B cell (primary cell): ENCODE measurements at regions of chr1 and their contacts with region 1.

Region 1: GRCh38 chr1:183635606-183636333 is at the start of gene ARPC5:
- DNase-seq: peak; percentile 98
- ATAC-seq: peak; percentile 88
- H3K4me3 ChIP-seq: peak within 1 kb of the TSS; percentile 83 to 95 (median 87)
- H3K4me3 Mint-ChIP-seq: peak within 1 kb of the TSS; percentile 100
- H3K27ac ChIP-seq: peak within 1 kb of the TSS; percentile 59 to 80
- H3K27ac Mint-ChIP-seq: peak within 1 kb of the TSS; percentile 99
- H3K4me1 ChIP-seq: peaks cover 20 to 34% of the 10 kb centered on the region in 2 donors
- H3K4me1 Mint-ChIP-seq: peaks cover 42% of the 10 kb centered on the region
- H3K27me3 ChIP-seq: no peaks in the 10 kb centered on the region
- H3K27me3 Mint-ChIP-seq: no peaks in the 10 kb centered on the region
- CTCF ChIP-seq: no peak
- total RNA-seq, gene ARPC5: 91.9 and 103 TPM in 2 replicates

Region 2: GRCh38 chr1:182029379-182030331 is 1606.1 kb before region 1 on chr1:
- CTCF ChIA-PET with region 1: no interaction called
- POLR2A ChIA-PET with region 1: no interaction called
- intact Hi-C with region 1: loop called (anchors 5 kb)
- DNase-seq: peak; percentile 98
- ATAC-seq: peak; percentile 92
- H3K4me3 ChIP-seq: peak overlapping the region; percentile 50 to 84 (median 72)
- H3K4me3 Mint-ChIP-seq: peak overlapping the region; percentile 92
- H3K27ac ChIP-seq: peak overlapping the region; percentile 60 to 71
- H3K27ac Mint-ChIP-seq: peak overlapping the region; percentile 94
- H3K4me1 ChIP-seq: peaks cover 9 to 12% of the 10 kb centered on the region in 2 donors
- H3K4me1 Mint-ChIP-seq: peaks cover 15% of the 10 kb centered on the region
- H3K27me3 ChIP-seq: no peaks in the 10 kb centered on the region
- H3K27me3 Mint-ChIP-seq: no peaks in the 10 kb centered on the region
- CTCF ChIP-seq: peak; percentile 41

Region 3: DNA sequence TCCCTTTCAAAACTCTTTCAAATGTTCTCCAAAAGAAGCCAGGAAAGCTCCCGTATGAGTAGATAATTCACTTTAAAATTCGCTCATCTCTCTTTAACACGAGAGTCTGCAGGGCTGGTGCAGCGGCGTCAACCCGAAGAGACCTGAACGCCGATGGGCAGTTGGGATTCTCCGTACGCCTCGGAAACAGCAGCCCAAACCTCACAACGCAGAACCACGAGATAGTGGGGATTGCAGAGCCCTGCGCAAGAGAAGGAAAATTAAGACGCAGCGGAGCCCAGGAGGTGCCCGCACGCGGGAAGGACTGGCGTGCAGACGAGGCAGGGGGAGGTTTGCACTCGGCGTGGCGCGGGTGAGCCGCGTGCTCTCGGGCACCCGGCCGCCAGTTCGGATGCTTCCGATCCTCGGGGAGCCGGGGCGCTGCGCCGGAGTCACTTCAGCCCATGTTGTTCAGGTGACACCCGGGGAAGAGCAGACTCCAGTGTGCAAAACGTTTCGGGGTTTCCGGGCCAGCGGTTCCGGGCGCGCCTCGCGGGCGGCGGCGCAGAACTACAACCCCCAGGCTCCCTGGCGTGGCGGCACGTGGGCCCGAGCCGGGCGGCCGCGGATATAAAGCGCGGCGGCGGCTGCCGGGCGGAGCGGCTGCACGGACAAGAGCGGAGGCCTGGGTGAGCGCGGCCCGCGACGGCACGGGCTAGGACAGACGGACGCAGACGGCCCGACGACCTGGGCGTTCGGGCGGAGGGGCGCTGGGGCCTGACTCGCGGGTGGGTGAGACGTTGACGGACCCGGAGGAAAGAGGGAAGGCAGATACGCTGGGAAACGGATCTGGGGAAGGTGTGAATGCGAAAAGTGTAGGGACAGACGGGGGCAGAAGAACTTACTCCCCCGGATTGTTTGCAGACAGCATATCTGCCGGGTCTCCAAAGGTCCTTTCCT is 846.4 kb before region 1 on chr1 and contains the start of gene NPL:
- CTCF ChIA-PET with region 1: no interaction called
- POLR2A ChIA-PET with region 1: no interaction called
- intact Hi-C with region 1: loop called (anchors 5 kb)
- DNase-seq: peak; percentile 88
- ATAC-seq: peak; percentile 95
- H3K4me3 ChIP-seq: peak within 1 kb of the TSS; percentile 49 to 70 (median 63)
- H3K4me3 Mint-ChIP-seq: peak within 1 kb of the TSS; percentile 90
- H3K27ac ChIP-seq: peak within 1 kb of the TSS in 1 of 2 donors; percentile 63
- H3K27ac Mint-ChIP-seq: peak within 1 kb of the TSS; percentile 87
- H3K4me1 ChIP-seq: peaks cover 9 to 11% of the 10 kb centered on the region in 2 donors
- H3K4me1 Mint-ChIP-seq: peaks cover 16% of the 10 kb centered on the region
- H3K27me3 ChIP-seq: peaks cover 0 to 6% (median 0%) of the 10 kb centered on the region in 4 experiments
- H3K27me3 Mint-ChIP-seq: peaks cover 3% of the 10 kb centered on the region
- CTCF ChIP-seq: no peak
- total RNA-seq, gene NPL: 3.4 and 5.9 TPM in 2 replicates

Region 4: DNA sequence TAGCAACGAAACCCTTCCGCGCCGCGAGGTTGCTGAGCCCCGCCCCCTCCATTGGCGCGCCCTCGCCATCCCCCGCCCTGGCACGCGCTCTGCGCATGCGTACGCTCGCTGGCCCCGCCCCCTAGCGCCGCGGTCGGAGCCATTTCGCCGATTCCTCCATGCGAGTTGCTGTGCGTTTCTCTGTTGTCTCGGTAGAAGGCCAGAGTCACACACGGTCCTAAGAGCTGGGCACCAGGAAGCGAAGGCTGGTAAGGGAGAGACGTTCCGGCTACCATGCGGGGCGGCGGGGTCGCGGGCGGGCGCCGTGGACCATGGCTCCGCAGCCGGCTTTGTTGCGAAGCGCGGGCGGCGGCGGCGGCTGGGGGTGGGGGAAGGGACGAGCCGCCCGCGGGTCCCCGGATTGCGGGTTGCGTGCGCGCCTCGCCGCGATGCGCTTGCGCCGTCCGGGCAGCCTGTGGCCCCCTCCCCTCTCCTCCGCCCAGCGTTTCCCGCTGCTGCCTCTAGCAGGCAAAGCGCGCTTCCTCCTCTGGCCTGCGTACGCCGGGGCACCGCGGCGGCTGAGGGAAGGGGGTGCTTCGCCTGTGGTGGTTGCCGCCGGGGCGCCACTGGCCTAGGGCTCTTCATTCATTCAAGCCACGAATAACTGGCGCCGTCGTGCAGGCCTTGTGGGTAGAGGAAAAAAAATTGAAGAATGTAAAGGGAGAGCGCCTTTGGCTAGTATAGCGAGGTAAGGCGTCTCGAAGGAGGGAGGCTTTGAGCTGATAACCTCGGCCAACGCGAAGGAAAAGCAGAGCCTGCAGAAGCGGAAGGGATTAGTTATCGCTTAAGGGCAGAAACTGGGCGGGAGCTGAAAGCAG is 796.3 kb before region 1 on chr1 and contains the start of gene DHX9:
- CTCF ChIA-PET with region 1: no interaction called
- POLR2A ChIA-PET with region 1: no interaction called
- intact Hi-C with region 1: loop called (anchors 2 kb)
- DNase-seq: peak; percentile 97
- ATAC-seq: peak; percentile 80
- H3K4me3 ChIP-seq: peak within 1 kb of the TSS; percentile 85 to 92 (median 92)
- H3K4me3 Mint-ChIP-seq: peak within 1 kb of the TSS; percentile 92
- H3K27ac ChIP-seq: peak within 1 kb of the TSS; percentile 81 to 85
- H3K27ac Mint-ChIP-seq: peak within 1 kb of the TSS; percentile 97
- H3K4me1 ChIP-seq: peaks cover 22 to 28% of the 10 kb centered on the region in 2 donors
- H3K4me1 Mint-ChIP-seq: peaks cover 35% of the 10 kb centered on the region
- H3K27me3 ChIP-seq: no peaks in the 10 kb centered on the region
- H3K27me3 Mint-ChIP-seq: no peaks in the 10 kb centered on the region
- CTCF ChIP-seq: peak; percentile 43
- total RNA-seq, gene DHX9: 207 and 213 TPM in 2 replicates

Region 5: DNA sequence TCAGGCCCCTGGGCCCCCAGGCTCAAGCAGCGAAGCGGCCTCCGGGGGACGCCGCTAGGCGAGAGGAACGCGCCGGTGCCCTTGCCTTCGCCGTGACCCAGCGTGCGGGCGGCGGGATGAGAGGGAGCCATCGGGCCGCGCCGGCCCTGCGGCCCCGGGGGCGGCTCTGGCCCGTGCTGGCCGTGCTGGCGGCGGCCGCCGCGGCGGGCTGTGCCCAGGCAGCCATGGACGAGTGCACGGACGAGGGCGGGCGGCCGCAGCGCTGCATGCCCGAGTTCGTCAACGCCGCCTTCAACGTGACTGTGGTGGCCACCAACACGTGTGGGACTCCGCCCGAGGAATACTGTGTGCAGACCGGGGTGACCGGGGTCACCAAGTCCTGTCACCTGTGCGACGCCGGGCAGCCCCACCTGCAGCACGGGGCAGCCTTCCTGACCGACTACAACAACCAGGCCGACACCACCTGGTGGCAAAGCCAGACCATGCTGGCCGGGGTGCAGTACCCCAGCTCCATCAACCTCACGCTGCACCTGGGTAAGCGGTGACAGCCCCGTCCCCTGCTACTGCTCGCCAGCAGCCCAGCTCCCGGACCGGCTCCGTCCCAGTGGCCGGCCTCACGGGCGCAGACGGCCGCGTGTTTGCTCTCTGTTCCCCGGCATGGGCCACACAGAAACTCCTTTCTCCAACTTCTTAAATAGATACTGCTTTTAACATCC is 612.0 kb before region 1 on chr1:
- CTCF ChIA-PET with region 1: no interaction called
- POLR2A ChIA-PET with region 1: no interaction called
- intact Hi-C with region 1: loop called (anchors 1 kb)
- DNase-seq: peak; percentile 84
- ATAC-seq: peak; percentile 73
- H3K4me3 ChIP-seq: peak overlapping the region; percentile 45 to 82 (median 68)
- H3K4me3 Mint-ChIP-seq: peak overlapping the region; percentile 99
- H3K27ac ChIP-seq: peak overlapping the region in 1 of 2 donors; percentile 20
- H3K27ac Mint-ChIP-seq: peak overlapping the region; percentile 97
- H3K4me1 ChIP-seq: peaks cover 19 to 21% of the 10 kb centered on the region in 2 donors
- H3K4me1 Mint-ChIP-seq: peaks cover 45% of the 10 kb centered on the region
- H3K27me3 ChIP-seq: no peaks in the 10 kb centered on the region
- H3K27me3 Mint-ChIP-seq: no peaks in the 10 kb centered on the region
- CTCF ChIP-seq: peak; percentile 75

Region 6: GRCh38 chr1:183461350-183461749 is 174.4 kb before region 1 on chr1:
- CTCF ChIA-PET with region 1: no interaction called
- POLR2A ChIA-PET with region 1: no interaction called
- intact Hi-C with region 1: no loop called
- DNase-seq: no peak
- ATAC-seq: no peak
- H3K4me3 ChIP-seq: no peak overlapping the region
- H3K4me3 Mint-ChIP-seq: no peak overlapping the region
- H3K27ac ChIP-seq: no peak overlapping the region
- H3K27ac Mint-ChIP-seq: no peak overlapping the region
- H3K4me1 ChIP-seq: peaks cover 0 to 4% of the 10 kb centered on the region in 2 donors
- H3K4me1 Mint-ChIP-seq: no peaks in the 10 kb centered on the region
- H3K27me3 ChIP-seq: peaks cover 0 to 12% (median 8%) of the 10 kb centered on the region in 4 experiments
- H3K27me3 Mint-ChIP-seq: peaks cover 29% of the 10 kb centered on the region
- CTCF ChIP-seq: no peak

Region 7: GRCh38 chr1:183590244-183591191 is 45.3 kb before region 1 on chr1 and contains the start of gene NCF2:
- CTCF ChIA-PET with region 1: interaction called, 11 read pairs
- POLR2A ChIA-PET with region 1: interaction called, 7 read pairs
- intact Hi-C with region 1: loop called (anchors 1 kb)
- DNase-seq: peak; percentile 91
- ATAC-seq: peak; percentile 84
- H3K4me3 ChIP-seq: peak within 1 kb of the TSS; percentile 20 to 81 (median 42)
- H3K4me3 Mint-ChIP-seq: peak within 1 kb of the TSS; percentile 37
- H3K27ac ChIP-seq: peak within 1 kb of the TSS; percentile 91 to 93
- H3K27ac Mint-ChIP-seq: peak within 1 kb of the TSS; percentile 95
- H3K4me1 ChIP-seq: peaks cover 61 to 64% of the 10 kb centered on the region in 2 donors
- H3K4me1 Mint-ChIP-seq: peaks cover 60% of the 10 kb centered on the region
- H3K27me3 ChIP-seq: no peaks in the 10 kb centered on the region
- H3K27me3 Mint-ChIP-seq: no peaks in the 10 kb centered on the region
- CTCF ChIP-seq: no peak
- total RNA-seq, gene NCF2: 10.5 and 10.7 TPM in 2 replicates